ENCODE measurements at regions of chr17 and their contacts with region 1.

Region 1: DNA sequence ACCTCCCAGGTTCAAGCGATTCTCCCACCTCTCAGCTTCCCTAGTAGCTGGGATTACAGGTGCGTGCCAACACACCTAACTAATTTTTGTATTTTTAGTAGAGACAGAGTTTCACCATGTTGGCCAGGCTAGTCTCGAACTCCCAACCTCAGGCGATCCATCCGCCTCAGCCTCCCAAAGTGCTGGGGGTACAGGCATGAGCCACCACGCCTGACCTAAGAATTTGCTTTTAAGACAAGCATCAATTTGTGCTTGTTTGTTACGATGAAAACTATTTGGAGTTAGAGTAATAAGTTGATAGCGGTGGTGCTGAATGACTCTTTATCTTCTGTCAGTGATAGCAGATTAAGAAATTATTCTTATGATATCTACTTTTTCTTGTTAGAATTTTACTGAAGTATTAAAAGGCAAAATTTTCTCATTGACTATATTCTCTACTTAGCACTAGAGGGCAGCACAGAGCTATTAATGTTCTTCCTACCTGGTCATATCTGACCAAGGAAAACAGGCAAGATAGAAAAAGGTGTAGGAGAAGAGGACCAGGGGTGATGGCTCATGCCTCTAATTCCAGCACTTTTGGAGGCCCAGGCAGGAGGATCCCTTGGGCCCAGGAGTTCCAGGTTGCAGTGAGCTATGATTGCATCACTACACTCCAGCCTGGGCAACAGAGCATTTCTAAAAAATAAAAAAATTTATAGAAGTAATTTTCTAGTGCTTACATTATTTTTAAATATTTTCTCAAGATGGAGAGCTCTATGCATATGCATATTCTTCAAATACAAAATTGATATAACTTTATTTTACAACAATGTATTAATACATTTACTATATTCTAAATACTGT is 24.5 kb downstream of the STXBP4 start:
- DNase-seq: peak; percentile 82
- ATAC-seq: peak; percentile 88
- H3K4me3 ChIP-seq: no peak overlapping the region
- H3K27ac ChIP-seq: no peak overlapping the region
- H3K4me1 ChIP-seq: no peaks in the 10 kb centered on the region
- H3K27me3 ChIP-seq: no peaks in the 10 kb centered on the region
- CTCF ChIP-seq: peak; percentile 81

Region 2: DNA sequence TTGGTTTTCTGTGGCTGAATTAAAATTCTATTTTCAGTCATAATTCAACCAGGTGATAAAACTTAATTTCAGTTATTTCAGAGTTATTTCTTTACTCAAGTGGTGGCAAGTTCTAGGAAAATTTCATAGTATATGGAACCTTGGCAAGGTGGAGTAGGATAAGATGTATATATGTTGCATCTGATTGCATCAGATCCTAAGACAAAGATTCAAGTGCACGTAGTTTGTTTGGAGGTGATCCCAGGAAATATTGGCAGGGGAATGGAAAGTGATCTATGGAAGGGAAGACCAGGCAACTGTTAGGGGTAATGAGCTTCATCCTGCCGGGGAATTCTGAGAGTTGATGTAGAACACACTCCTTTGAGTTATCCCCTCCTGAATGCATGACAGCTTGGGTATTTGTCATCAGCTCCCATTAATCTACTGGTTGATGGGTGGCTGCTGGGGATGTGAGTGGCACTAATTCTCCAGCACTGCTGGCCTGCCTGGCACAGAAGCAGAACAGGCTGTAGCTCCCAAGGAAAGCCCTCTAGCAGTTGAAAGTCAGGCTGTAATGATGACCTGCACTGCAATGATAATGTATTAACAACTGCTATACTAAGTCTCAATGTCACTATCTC is 144.5 kb before region 1 on chr17:
- CTCF ChIA-PET with region 1: no interaction called
- POLR2A ChIA-PET with region 1: no interaction called
- intact Hi-C with region 1: no loop called
- DNase-seq: no peak
- ATAC-seq: no peak
- H3K4me3 ChIP-seq: no peak overlapping the region
- H3K27ac ChIP-seq: no peak overlapping the region
- H3K4me1 ChIP-seq: no peaks in the 10 kb centered on the region
- H3K27me3 ChIP-seq: no peaks in the 10 kb centered on the region
- CTCF ChIP-seq: no peak

Region 3: GRCh38 chr17:54919425-54919824 is 73.6 kb before region 1 on chr17:
- CTCF ChIA-PET with region 1: no interaction called
- POLR2A ChIA-PET with region 1: no interaction called
- intact Hi-C with region 1: no loop called
- DNase-seq: no peak
- ATAC-seq: no peak
- H3K4me3 ChIP-seq: no peak overlapping the region
- H3K27ac ChIP-seq: no peak overlapping the region
- H3K4me1 ChIP-seq: no peaks in the 10 kb centered on the region
- H3K27me3 ChIP-seq: no peaks in the 10 kb centered on the region
- CTCF ChIP-seq: no peak

Region 4: DNA sequence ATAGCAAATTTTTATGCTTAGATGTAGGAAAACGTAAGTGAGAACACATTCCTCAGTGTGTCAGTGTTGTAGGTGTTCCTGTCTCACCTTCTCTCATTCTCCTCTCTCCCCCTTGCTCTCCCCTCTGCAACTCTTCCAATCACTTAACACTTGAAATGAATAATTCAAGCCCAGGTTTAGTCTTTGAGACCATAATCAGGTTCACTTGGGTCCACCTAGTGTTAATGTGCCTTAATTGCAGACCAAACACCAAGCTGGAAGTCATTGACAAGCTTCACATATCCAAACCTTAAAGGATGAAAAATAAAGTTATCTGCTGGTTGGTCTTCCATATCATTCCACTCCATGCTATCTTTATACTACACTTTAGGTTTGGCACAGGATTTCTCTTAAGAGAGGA is 12.5 kb after region 1 on chr17:
- CTCF ChIA-PET with region 1: interaction called, 10 read pairs
- POLR2A ChIA-PET with region 1: no interaction called
- intact Hi-C with region 1: loop called (anchors 1 kb)
- DNase-seq: peak; percentile 69
- ATAC-seq: peak; percentile 81
- H3K4me3 ChIP-seq: no peak overlapping the region
- H3K27ac ChIP-seq: no peak overlapping the region
- H3K4me1 ChIP-seq: no peaks in the 10 kb centered on the region
- H3K27me3 ChIP-seq: no peaks in the 10 kb centered on the region
- CTCF ChIP-seq: peak; percentile 74

Region 5: GRCh38 chr17:55023626-55024025 is 30.6 kb after region 1 on chr17:
- CTCF ChIA-PET with region 1: no interaction called
- POLR2A ChIA-PET with region 1: no interaction called
- intact Hi-C with region 1: no loop called
- DNase-seq: no peak
- ATAC-seq: no peak
- H3K4me3 ChIP-seq: no peak overlapping the region
- H3K27ac ChIP-seq: no peak overlapping the region
- H3K4me1 ChIP-seq: no peaks in the 10 kb centered on the region
- H3K27me3 ChIP-seq: no peaks in the 10 kb centered on the region
- CTCF ChIP-seq: no peak